IMR-90 (cell line): ENCODE measurements at regions of chr12 and their contacts with region 1.

Region 1: DNA sequence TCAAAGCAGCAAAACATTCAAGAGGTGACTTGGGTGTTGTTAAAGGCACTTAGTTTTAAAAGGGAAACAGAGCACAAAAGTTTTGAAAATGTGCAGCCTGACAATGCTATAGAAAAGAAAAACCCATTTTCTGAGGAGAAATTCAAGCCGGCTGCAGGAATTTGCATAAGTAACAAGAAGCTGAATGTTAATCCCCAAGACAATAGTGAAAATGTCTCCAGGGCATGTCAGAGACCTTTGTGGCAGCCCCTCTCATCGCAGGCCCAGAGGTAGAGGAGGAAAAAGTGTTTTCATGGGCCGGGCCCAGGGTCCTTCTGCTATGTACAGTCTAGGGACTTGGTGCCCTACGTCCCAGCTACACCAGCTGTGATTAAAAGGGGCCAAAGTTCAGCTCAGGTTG is 167.9 kb downstream of the PPFIA2 start:
- DNase-seq: no peak
- ATAC-seq: no peak
- H3K4me3 ChIP-seq: no peak overlapping the region
- H3K27ac ChIP-seq: no peak overlapping the region
- H3K4me1 ChIP-seq: no peaks in the 10 kb centered on the region
- H3K27me3 ChIP-seq: no peaks in the 10 kb centered on the region
- CTCF ChIP-seq: no peak
- POLR2A ChIP-seq: no peak
- RAD21 ChIP-seq: no peak

Region 2: GRCh38 chr12:81077686-81078441 is 513.4 kb before region 1 on chr12 and contains the start of gene ACSS3:
- CTCF ChIA-PET with region 1: no interaction called
- POLR2A ChIA-PET with region 1: no interaction called
- dilution Hi-C with region 1: no loop called
- in situ Hi-C with region 1: no loop called
- intact Hi-C with region 1: no loop called
- DNase-seq: no peak
- ATAC-seq: peak; percentile 67
- H3K4me3 ChIP-seq: peak within 1 kb of the TSS; percentile 31
- H3K27ac ChIP-seq: no peak within 1 kb of the TSS
- H3K4me1 ChIP-seq: peaks cover 2% of the 10 kb centered on the region; the same call in 1 of the 2 replicates
- H3K27me3 ChIP-seq: no peaks in the 10 kb centered on the region; the same call in 1 of the 2 replicates
- CTCF ChIP-seq: no peak
- POLR2A ChIP-seq: no peak
- RAD21 ChIP-seq: no peak
- total RNA-seq, gene ACSS3: 1.4 and 2.0 TPM in 2 replicates

Region 3: DNA sequence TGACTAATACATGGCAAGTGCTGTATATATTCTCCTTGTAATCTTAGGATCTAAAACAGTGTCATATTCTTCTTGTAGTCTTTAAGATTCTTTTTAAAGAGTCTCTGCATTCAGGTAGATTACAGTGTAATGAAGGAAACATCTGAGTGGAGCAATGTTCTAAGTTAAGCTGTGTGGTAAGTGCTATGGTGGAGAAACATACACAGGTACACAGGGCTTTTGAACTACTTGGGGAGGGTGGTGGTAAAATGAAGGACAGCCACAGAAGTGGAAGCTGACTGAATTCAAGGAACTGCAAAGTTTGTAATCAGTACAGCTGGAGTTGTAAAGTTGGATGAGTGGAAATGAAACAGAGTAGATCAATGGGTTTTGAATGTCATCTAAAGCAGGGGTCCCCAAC is 485.6 kb before region 1 on chr12:
- CTCF ChIA-PET with region 1: no interaction called
- POLR2A ChIA-PET with region 1: no interaction called
- dilution Hi-C with region 1: no loop called
- in situ Hi-C with region 1: no loop called
- intact Hi-C with region 1: no loop called
- DNase-seq: no peak
- ATAC-seq: no peak
- H3K4me3 ChIP-seq: no peak overlapping the region
- H3K27ac ChIP-seq: no peak overlapping the region
- H3K4me1 ChIP-seq: no peaks in the 10 kb centered on the region
- H3K27me3 ChIP-seq: no peaks in the 10 kb centered on the region
- CTCF ChIP-seq: no peak
- POLR2A ChIP-seq: no peak
- RAD21 ChIP-seq: no peak

Region 4: GRCh38 chr12:81461163-81461562 is 130.1 kb before region 1 on chr12:
- CTCF ChIA-PET with region 1: no interaction called
- POLR2A ChIA-PET with region 1: no interaction called
- dilution Hi-C with region 1: no loop called
- in situ Hi-C with region 1: no loop called
- intact Hi-C with region 1: no loop called
- DNase-seq: no peak
- ATAC-seq: no peak
- H3K4me3 ChIP-seq: no peak overlapping the region
- H3K27ac ChIP-seq: no peak overlapping the region
- H3K4me1 ChIP-seq: no peaks in the 10 kb centered on the region
- H3K27me3 ChIP-seq: no peaks in the 10 kb centered on the region
- CTCF ChIP-seq: no peak
- POLR2A ChIP-seq: no peak
- RAD21 ChIP-seq: no peak

Region 5: GRCh38 chr12:82448911-82449578 is 857.8 kb after region 1 on chr12:
- CTCF ChIA-PET with region 1: no interaction called
- POLR2A ChIA-PET with region 1: no interaction called
- dilution Hi-C with region 1: no loop called
- in situ Hi-C with region 1: no loop called
- intact Hi-C with region 1: loop called (anchors 5 kb)
- DNase-seq: no peak
- ATAC-seq: no peak
- H3K4me3 ChIP-seq: no peak overlapping the region
- H3K27ac ChIP-seq: no peak overlapping the region
- H3K4me1 ChIP-seq: no peaks in the 10 kb centered on the region
- H3K27me3 ChIP-seq: no peaks in the 10 kb centered on the region
- CTCF ChIP-seq: no peak
- POLR2A ChIP-seq: no peak
- RAD21 ChIP-seq: no peak